ENCODE measurements at regions of chr21 and their contacts with region 1.

Region 1: GRCh38 chr21:45554477-45555175 is 12.4 kb upstream of the SLC19A1 start:
- DNase-seq: peak; percentile 57 to 95 (median 88)

Region 2: GRCh38 chr21:45640888-45641479 is 86.4 kb after region 1 on chr21:
- intact Hi-C with region 1: no loop called
- DNase-seq: no peak

Region 3: DNA sequence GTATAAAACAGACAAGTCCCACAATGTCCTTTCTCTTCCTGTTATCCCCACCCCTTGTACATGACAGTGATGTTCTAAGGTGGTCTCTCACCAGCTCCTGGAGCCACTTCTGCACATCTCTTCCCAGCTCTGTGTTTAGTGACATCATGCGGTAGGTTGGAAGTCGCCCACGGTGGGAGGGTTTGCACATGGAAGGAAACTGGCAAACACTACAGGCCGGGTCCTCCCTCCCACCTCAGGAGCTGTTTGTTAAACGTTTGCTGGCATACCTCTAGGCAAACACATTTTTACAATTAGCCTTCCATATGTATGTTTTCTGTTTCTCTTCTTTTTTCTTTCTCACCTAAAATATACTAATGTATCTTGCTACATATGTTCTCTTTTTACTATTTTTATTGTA is 196.3 kb after region 1 on chr21:
- intact Hi-C with region 1: no loop called
- DNase-seq: no peak

Region 4: GRCh38 chr21:45820171-45821091 is 265.8 kb after region 1 on chr21:
- intact Hi-C with region 1: loop called (anchors 5 kb)
- DNase-seq: peak; percentile 70 to 91 (median 82)